Transverse colon (tissue), 4 donors: ENCODE measurements at regions of chr22 and their contacts with region 1.

Region 1: GRCh38 chr22:28600546-28601143 is 79.0 kb downstream of the TTC28 start:
- DNase-seq: no peak
- H3K4me3 ChIP-seq: no peak overlapping the region
- H3K27ac ChIP-seq: no peak overlapping the region
- H3K4me1 ChIP-seq: no peaks in the 10 kb centered on the region
- H3K27me3 ChIP-seq: no peaks in the 10 kb centered on the region
- CTCF ChIP-seq: peak; percentile 48 to 62 (median 59)
- EP300 ChIP-seq: no peak
- POLR2A ChIP-seq: no peak

Region 2: GRCh38 chr22:29022101-29022817 is 421.6 kb after region 1 on chr22:
- in situ Hi-C with region 1: loop called (anchors 10 to 25 kb)
- intact Hi-C with region 1: no loop called
- DNase-seq: no peak
- H3K4me3 ChIP-seq: no peak overlapping the region
- H3K27ac ChIP-seq: peak overlapping the region in 2 of 4 donors; percentile 22 to 33
- H3K4me1 ChIP-seq: peaks cover 9 to 32% (median 15%) of the 10 kb centered on the region in 4 donors
- H3K27me3 ChIP-seq: no peaks in the 10 kb centered on the region
- CTCF ChIP-seq: no peak
- EP300 ChIP-seq: no peak
- POLR2A ChIP-seq: no peak

Region 3: DNA sequence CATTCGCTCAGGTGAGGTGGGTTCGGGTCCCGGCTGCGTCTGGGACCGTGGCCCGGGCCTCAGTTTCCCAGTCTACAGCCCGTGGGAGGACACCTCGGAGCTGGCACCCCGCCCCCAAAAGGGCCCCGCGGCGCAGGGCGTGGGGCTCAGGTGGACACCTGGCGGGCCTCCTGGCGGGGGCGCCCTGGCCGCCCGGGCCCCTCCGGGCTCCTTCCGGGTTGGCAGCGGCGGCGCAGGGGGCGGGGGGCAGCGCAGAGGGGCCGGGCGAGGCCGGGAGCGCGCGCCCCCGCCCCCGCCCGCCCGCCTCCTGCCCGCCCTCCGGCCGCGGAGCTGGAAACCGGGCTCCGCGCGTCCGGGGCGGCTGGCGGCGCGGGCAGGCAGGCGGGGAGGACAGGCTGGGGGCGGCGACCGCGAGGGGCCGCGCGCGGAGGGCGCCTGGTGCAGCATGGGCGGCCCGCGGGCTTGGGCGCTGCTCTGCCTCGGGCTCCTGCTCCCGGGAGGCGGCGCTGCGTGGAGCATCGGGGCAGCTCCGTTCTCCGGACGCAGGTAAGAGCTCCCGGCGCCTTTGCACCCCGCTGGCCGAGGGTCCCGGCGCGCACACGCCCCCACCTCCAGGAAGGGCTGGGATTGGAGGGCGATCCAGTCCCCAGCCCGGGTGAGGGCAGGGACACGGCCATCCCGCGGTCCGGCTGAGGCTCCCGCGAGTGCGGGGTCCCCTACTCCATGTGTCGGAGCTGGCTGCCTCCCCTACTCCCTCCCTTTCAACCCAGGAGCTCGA is 605.1 kb after region 1 on chr22 and contains the start of gene EMID1:
- in situ Hi-C with region 1: no loop called
- intact Hi-C with region 1: no loop called
- DNase-seq: peak; percentile 47
- H3K4me3 ChIP-seq: peak within 1 kb of the TSS in 3 of 4 donors; percentile 29 to 55 (median 46)
- H3K27ac ChIP-seq: peak within 1 kb of the TSS in 2 of 4 donors; percentile 29 to 36
- H3K4me1 ChIP-seq: peaks cover 0 to 25% (median 13%) of the 10 kb centered on the region in 4 donors
- H3K27me3 ChIP-seq: peaks cover 26% of the 10 kb centered on the region
- CTCF ChIP-seq: no peak
- EP300 ChIP-seq: no peak
- POLR2A ChIP-seq: no peak
- total RNA-seq, gene EMID1: 0.68 to 53.9 (median 1.9) TPM in 3 of 4 donors, not detected in the other